ENCODE measurements at regions of chr1 and their contacts with region 1.

Region 1: DNA sequence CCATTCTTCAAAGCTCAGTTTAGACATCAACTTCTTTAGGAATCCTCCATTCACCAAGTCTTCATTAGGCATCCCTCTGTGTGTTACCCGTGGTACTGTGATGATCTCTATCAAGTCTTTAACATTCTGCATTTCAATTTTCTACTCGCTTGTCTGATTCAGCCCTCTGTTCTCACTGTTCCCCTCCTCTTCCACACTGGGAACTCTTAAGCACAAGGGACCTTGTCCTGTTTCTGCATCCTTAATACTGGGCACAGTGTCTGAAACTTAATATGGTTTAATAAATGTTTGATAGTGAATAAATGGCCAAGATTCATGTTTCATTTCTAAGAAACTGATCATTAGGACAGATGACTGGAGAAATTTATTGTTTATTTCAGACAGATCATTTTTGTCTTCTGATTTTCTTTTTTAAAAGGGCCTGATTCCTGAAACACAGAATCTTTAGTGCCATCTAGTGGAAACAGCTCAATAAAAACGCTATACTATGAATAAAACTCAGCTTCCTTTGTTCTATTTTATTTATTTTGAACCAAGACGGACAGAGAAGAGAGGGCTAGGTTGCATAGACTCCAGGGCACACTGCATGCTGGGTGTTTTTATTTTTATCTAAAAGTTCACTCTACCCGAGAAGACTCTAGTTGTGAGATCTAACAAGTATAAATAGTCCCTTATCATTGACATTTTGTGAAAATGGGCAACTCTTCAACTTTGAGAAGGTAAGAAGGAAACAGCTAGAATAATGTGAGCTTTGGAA is 7.0 kb upstream of the TRIM45 start:
- DNase-seq: peak; percentile 72
- ATAC-seq: peak; percentile 67
- H3K4me3 ChIP-seq: 0 out of 2 replicates have a peak overlapping the region, but pooled peaks have one; percentile 14
- H3K27ac ChIP-seq: no peak overlapping the region
- H3K4me1 ChIP-seq: peaks cover 10% of the 10 kb centered on the region; the same call in 1 of the 2 replicates
- H3K27me3 ChIP-seq: no peaks in the 10 kb centered on the region
- CTCF ChIP-seq: peak; percentile 78

Region 2: GRCh38 chr1:117067533-117068370 is 60.7 kb before region 1 on chr1:
- CTCF ChIA-PET with region 1: interaction called, 20 read pairs
- POLR2A ChIA-PET with region 1: no interaction called
- intact Hi-C with region 1: loop called (anchors 1 kb)
- DNase-seq: peak; percentile 65
- ATAC-seq: peak; percentile 95
- H3K4me3 ChIP-seq: no peak overlapping the region
- H3K27ac ChIP-seq: no peak overlapping the region
- H3K4me1 ChIP-seq: no peaks in the 10 kb centered on the region
- H3K27me3 ChIP-seq: no peaks in the 10 kb centered on the region
- CTCF ChIP-seq: peak; percentile 89

Measured in PC-3 (cell line).